Dorsolateral prefrontal cortex (tissue), 120 donors: ENCODE measurements at regions of chr16 and their contacts with region 1.

Region 1: DNA sequence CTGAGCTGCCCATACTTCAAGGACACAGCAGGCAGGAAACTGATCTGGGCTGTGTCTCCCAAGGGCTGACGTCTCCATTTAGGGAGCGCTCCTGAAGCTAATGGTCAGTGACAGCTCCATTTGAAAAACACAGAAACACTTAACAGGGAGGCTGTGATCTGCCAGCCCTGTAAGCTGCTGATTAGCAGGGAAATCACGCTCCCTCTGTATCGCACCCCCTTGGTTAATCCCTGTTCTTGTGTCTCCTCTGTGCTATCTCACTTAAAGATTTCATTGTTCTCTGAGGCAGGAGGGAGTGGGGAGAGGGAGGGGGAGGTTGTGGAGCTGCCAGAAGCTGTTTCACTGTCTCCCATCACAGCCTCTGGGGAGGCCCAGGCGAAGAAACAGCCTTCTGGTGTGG is 47.4 kb upstream of the CACNG3 start:
- DNase-seq: peak; percentile 47 to 88 (median 70)
- H3K4me3 ChIP-seq: peak overlapping the region in 23 of 59 donors; percentile 1 to 44 (median 12)
- H3K27ac ChIP-seq: peak overlapping the region in 58 of 59 donors; percentile 4 to 95 (median 82)
- H3K27me3 ChIP-seq: no peaks in the 10 kb centered on the region
- CTCF ChIP-seq: peak in 7 of 56 donors; percentile 6 to 39 (median 17)

Region 2: DNA sequence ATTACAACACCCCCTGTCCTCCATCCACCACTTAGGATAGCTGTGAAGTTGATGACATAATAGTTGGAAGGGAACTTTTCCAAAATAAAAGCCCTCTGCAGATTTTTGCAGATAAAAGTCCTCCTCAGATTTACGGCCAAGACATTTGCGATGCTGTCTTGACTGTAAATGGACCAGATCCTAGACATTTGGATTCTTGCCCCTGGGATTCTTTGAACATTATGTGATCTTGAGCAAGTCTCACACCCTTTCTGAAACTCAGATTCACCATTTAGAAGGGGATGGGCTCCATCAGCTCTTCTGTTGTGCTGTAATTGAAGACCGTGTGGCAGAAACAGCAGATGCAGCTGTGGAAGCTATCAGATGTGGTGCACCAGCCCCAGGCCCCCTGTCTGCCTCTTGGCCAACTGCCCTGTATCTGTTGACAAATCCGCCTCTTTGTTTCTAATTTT is 106.5 kb before region 1 on chr16:
- intact Hi-C with region 1: no loop called
- DNase-seq: peak in 7 of 10 donors; percentile 32 to 75 (median 63)
- H3K4me3 ChIP-seq: peak overlapping the region in 19 of 59 donors; percentile 1 to 37 (median 12)
- H3K27ac ChIP-seq: peak overlapping the region in 58 of 59 donors; percentile 30 to 95 (median 85)
- H3K27me3 ChIP-seq: no peaks in the 10 kb centered on the region
- CTCF ChIP-seq: peak in 22 of 56 donors; percentile 7 to 42 (median 26)

Region 3: GRCh38 chr16:24116989-24117388 is 91.7 kb before region 1 on chr16:
- intact Hi-C with region 1: loop called in 1 of 2 experiments (anchors 5 kb)
- DNase-seq: no peak
- H3K4me3 ChIP-seq: peak overlapping the region in 1 of 59 donors; percentile 8
- H3K27ac ChIP-seq: peak overlapping the region in 54 of 59 donors; percentile 11 to 99 (median 82)
- H3K27me3 ChIP-seq: no peaks in the 10 kb centered on the region
- CTCF ChIP-seq: no peak